ENCODE measurements at regions of chr7 and their contacts with region 1.

Region 1: GRCh38 chr7:1432411-1433082 is 26.7 kb downstream of the MICALL2 start:
- DNase-seq: peak; percentile 57 to 90 (median 80)
- ATAC-seq: peak; percentile 97
- H3K4me3 ChIP-seq: no peak overlapping the region
- H3K4me3 Mint-ChIP-seq: no peak overlapping the region
- H3K27ac ChIP-seq: no peak overlapping the region
- H3K27ac Mint-ChIP-seq: no peak overlapping the region
- H3K4me1 ChIP-seq: peaks cover 4% of the 10 kb centered on the region
- H3K4me1 Mint-ChIP-seq: peaks cover 2% of the 10 kb centered on the region
- H3K27me3 ChIP-seq: peaks cover 0 to 10% of the 10 kb centered on the region in 2 experiments
- H3K27me3 Mint-ChIP-seq: peaks cover 6% of the 10 kb centered on the region
- CTCF ChIP-seq: peak; percentile 97

Region 2: DNA sequence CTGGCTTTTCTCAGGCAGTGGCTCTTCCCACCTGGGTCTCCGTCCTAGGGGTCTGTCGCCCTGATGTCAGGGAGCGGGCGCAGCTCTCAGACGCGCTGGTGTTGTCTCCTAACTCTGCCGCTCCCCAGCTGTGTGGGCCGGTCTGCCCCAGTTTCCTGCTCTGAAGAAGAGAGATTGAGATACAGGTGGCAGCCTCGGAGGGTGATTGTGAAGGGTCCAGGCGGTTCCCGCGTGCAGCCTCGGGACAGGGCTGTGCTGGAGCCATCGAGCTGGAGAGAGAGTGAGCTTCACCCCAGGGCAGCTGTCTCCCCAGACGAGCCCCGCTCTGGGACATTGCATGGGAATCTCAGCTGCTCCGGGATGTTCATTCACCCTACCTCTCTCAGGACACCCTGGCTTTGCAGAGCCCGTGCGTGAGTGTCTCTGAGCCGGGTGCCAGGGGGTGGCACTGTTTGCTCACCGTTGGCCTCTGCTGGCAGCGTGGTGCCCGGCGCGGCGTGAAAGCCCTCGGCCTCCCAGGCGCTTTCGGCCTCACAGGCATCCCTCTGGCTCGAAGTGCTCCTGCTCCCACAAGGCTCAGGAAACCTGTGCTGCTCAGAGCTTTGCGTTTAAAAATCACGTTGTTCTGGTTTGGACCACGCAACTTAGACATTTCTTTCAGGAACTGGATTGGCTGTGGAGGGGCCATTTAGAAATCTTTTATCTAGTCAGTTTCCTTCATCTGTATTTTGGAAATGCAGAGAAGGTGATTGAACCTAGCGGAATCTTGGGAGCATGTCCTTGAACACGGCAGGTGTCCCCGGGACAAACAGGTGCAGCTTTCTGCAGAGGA is 238.7 kb before region 1 on chr7:
- CTCF ChIA-PET with region 1: interaction called, 36 read pairs
- POLR2A ChIA-PET with region 1: no interaction called
- intact Hi-C with region 1: loop called in 1 of 2 experiments (anchors 1 kb)
- DNase-seq: peak in 8 of 9 experiments; percentile 11 to 73 (median 41)
- ATAC-seq: no peak
- H3K4me3 ChIP-seq: no peak overlapping the region
- H3K4me3 Mint-ChIP-seq: no peak overlapping the region
- H3K27ac ChIP-seq: no peak overlapping the region
- H3K27ac Mint-ChIP-seq: no peak overlapping the region
- H3K4me1 ChIP-seq: peaks cover 12% of the 10 kb centered on the region
- H3K4me1 Mint-ChIP-seq: peaks cover 8% of the 10 kb centered on the region
- H3K27me3 ChIP-seq: no peaks in the 10 kb centered on the region
- H3K27me3 Mint-ChIP-seq: peaks cover 17% of the 10 kb centered on the region
- CTCF ChIP-seq: peak; percentile 15

Region 3: GRCh38 chr7:1225441-1226185 is 206.9 kb before region 1 on chr7:
- CTCF ChIA-PET with region 1: interaction called, 28 read pairs
- POLR2A ChIA-PET with region 1: no interaction called
- intact Hi-C with region 1: loop called (anchors 1 kb)
- DNase-seq: peak in 8 of 9 experiments; percentile 21 to 64 (median 50)
- ATAC-seq: peak; percentile 61
- H3K4me3 ChIP-seq: no peak overlapping the region
- H3K4me3 Mint-ChIP-seq: no peak overlapping the region
- H3K27ac ChIP-seq: no peak overlapping the region
- H3K27ac Mint-ChIP-seq: no peak overlapping the region
- H3K4me1 ChIP-seq: peaks cover 8% of the 10 kb centered on the region
- H3K4me1 Mint-ChIP-seq: peaks cover 7% of the 10 kb centered on the region
- H3K27me3 ChIP-seq: peaks cover 44 to 49% of the 10 kb centered on the region in 2 experiments
- H3K27me3 Mint-ChIP-seq: peaks cover 60% of the 10 kb centered on the region
- CTCF ChIP-seq: peak; percentile 81

Region 4: DNA sequence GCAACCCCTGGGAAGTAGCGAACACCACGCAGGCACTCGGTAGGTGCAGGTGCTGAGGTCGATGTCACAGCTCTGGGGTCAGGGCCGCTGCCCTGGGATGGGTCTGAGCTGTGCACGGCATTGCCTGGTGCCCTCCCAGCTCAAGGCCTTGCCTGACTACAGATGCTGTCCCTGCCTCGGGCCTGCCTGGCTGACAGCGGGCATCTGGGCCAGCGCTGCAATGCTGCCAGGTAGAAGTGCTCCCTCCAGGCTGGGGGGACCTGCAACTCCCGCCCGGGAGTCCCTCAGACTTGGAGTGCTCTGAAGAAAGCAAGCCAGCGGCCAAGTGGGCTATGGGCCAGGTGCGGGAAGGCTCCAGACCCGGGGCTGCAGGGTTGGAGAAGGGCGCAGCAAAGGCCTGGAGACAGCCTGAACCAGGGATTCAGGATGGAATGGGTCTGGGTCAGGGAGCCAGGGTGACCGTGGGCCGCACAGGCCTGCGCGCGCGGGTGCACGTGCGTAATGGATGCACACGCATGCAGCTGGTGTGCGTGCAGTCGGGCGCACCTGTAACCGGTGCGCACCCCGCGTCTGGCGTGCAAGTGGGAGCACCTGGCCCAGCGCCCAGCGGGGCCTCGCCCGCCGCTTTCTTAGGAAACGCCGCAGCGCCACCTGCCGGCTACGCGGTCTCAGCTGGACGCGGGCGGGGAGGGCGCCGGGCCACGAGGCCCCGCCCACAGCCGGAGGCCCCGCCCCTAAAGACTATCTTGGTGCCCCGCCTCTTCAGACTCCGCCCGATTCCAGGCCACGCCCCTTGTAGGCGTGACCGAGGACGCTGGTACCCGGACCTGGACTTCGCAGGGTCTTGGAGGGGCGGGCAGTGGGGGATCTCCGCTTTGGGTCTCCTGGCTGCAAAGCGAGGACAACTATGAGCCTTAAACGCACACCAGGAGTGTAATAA is 20.0 kb before region 1 on chr7:
- CTCF ChIA-PET with region 1: interaction called, 17 read pairs
- POLR2A ChIA-PET with region 1: no interaction called
- intact Hi-C with region 1: loop called (anchors 1 kb)
- DNase-seq: peak; percentile 80 to 97 (median 89)
- ATAC-seq: peak; percentile 91
- H3K4me3 ChIP-seq: peak overlapping the region; percentile 23 to 30
- H3K4me3 Mint-ChIP-seq: peak overlapping the region; percentile 61
- H3K27ac ChIP-seq: peak overlapping the region in 1 of 2 experiments; percentile 22
- H3K27ac Mint-ChIP-seq: no peak overlapping the region
- H3K4me1 ChIP-seq: peaks cover 24% of the 10 kb centered on the region
- H3K4me1 Mint-ChIP-seq: peaks cover 13% of the 10 kb centered on the region
- H3K27me3 ChIP-seq: peaks cover 0 to 3% of the 10 kb centered on the region in 2 experiments
- H3K27me3 Mint-ChIP-seq: peaks cover 6% of the 10 kb centered on the region
- CTCF ChIP-seq: peak; percentile 81

Region 5: DNA sequence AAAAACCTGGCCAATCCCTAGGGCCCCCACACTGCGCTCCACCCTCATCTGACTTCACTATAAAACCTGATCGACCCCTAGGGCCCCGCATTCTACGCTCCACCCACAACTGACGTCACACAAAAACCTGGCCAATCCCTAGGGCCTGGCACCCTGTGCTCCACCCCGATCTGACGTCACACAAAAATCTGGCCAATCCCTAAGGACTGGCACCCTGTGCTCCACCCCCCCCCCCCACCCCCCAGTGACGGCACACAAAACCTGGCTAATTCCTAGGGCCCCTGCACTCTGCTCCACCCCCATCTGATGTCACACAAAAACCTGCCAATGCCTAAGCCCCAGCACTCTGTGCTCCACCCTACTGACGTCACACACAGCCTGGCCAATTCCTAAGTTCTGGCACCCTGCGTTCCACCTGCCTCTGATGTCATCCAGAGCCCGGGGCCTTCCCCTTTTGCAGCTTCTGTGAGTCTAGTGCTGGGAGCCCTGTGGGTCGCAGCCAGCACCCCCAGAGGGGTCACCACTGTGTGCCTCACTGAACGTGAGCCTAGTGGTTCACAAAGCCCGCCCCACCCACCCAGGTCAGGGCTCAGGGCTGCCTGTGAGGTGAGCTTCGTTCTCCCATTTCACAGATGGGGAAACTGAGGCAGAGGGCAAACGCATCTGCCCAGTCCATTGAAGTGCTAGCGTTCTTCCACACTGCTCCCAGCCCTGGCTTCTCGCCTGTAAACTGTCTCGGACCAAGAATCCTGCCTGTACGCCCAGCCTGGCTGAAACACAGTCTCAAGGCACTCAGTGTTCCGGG is 13.8 kb before region 1 on chr7:
- CTCF ChIA-PET with region 1: interaction called, 17 read pairs
- POLR2A ChIA-PET with region 1: no interaction called
- intact Hi-C with region 1: loop called (anchors 1 kb)
- DNase-seq: no peak
- ATAC-seq: no peak
- H3K4me3 ChIP-seq: no peak overlapping the region
- H3K4me3 Mint-ChIP-seq: no peak overlapping the region
- H3K27ac ChIP-seq: no peak overlapping the region
- H3K27ac Mint-ChIP-seq: no peak overlapping the region
- H3K4me1 ChIP-seq: peaks cover 22% of the 10 kb centered on the region
- H3K4me1 Mint-ChIP-seq: peaks cover 20% of the 10 kb centered on the region
- H3K27me3 ChIP-seq: peaks cover 0 to 6% of the 10 kb centered on the region in 2 experiments
- H3K27me3 Mint-ChIP-seq: peaks cover 6% of the 10 kb centered on the region
- CTCF ChIP-seq: no peak